Caco-2 (cell line): ENCODE measurements at regions of chr5 and their contacts with region 1.

Region 1: GRCh38 chr5:75668977-75669689 is 48.1 kb downstream of the POC5 start:
- DNase-seq: peak in 1 of 2 experiments; percentile 18
- H3K4me3 ChIP-seq: peak overlapping the region; percentile 19
- H3K4me3 Mint-ChIP-seq: peak overlapping the region; percentile 73
- H3K27ac Mint-ChIP-seq: peak overlapping the region; percentile 28
- H3K4me1 ChIP-seq: peaks cover 9% of the 10 kb centered on the region; the same call in 1 of the 2 replicates
- H3K4me1 Mint-ChIP-seq: peaks cover 14% of the 10 kb centered on the region
- H3K27me3 ChIP-seq: no peaks in the 10 kb centered on the region
- H3K27me3 Mint-ChIP-seq: no peaks in the 10 kb centered on the region
- CTCF ChIP-seq: no peak

Region 2: GRCh38 chr5:75363726-75364495 is 305.2 kb before region 1 on chr5:
- CTCF ChIA-PET with region 1: no interaction called
- POLR2A ChIA-PET with region 1: no interaction called
- intact Hi-C with region 1: loop called (anchors 10 kb)
- DNase-seq: no peak
- H3K4me3 ChIP-seq: no peak overlapping the region
- H3K4me3 Mint-ChIP-seq: peak overlapping the region; percentile 10
- H3K27ac Mint-ChIP-seq: peak overlapping the region; percentile 26
- H3K4me1 ChIP-seq: no peaks in the 10 kb centered on the region
- H3K4me1 Mint-ChIP-seq: no peaks in the 10 kb centered on the region
- H3K27me3 ChIP-seq: no peaks in the 10 kb centered on the region
- H3K27me3 Mint-ChIP-seq: no peaks in the 10 kb centered on the region
- CTCF ChIP-seq: no peak

Region 3: GRCh38 chr5:75584641-75585040 is 84.5 kb before region 1 on chr5:
- CTCF ChIA-PET with region 1: no interaction called
- POLR2A ChIA-PET with region 1: no interaction called
- intact Hi-C with region 1: loop called (anchors 2 kb)
- DNase-seq: no peak
- H3K4me3 ChIP-seq: no peak overlapping the region
- H3K4me3 Mint-ChIP-seq: no peak overlapping the region
- H3K27ac Mint-ChIP-seq: no peak overlapping the region
- H3K4me1 ChIP-seq: no peaks in the 10 kb centered on the region
- H3K4me1 Mint-ChIP-seq: no peaks in the 10 kb centered on the region
- H3K27me3 ChIP-seq: no peaks in the 10 kb centered on the region
- H3K27me3 Mint-ChIP-seq: no peaks in the 10 kb centered on the region
- CTCF ChIP-seq: peak; percentile 32 to 36

Region 4: DNA sequence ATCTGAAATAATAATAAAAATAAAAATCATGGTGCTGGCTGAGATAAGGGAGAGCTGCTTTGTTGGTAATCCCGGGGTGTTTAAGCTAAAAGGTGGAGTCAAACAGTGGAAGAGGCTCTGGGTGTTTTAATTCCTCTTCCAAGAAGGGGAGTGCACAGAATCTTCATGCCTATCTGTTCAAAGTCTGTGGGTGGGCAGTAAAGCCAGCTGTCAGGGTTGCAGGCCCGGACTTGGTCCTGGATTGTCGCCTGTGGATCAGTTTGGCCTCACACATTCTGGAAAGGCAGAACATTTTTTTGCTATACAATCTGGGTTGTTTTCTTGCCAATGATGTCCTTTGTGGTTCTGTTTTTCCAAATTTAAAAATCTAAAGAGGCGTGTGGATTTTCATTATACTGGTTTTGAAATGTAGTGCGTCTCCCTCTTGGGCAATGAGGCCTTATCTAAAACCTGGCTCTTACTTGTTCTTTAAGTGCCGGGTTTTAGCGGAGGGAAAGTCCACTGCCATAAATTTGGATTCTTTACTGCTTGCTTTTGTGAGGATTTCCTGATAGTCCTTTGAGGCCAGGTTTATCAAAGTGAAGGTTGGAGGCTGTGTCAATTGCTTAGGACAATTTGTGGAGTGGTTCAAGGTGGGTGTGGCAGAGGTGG is 52.0 kb before region 1 on chr5:
- CTCF ChIA-PET with region 1: interaction called, 4 read pairs
- POLR2A ChIA-PET with region 1: no interaction called
- intact Hi-C with region 1: loop called (anchors 2 kb)
- DNase-seq: peak; percentile 60 to 72
- H3K4me3 ChIP-seq: no peak overlapping the region
- H3K4me3 Mint-ChIP-seq: peak overlapping the region; percentile 58
- H3K27ac Mint-ChIP-seq: no peak overlapping the region
- H3K4me1 ChIP-seq: peaks cover 98% of the 10 kb centered on the region
- H3K4me1 Mint-ChIP-seq: peaks cover 43% of the 10 kb centered on the region
- H3K27me3 ChIP-seq: no peaks in the 10 kb centered on the region
- H3K27me3 Mint-ChIP-seq: no peaks in the 10 kb centered on the region
- CTCF ChIP-seq: no peak